ENCODE measurements at regions of chr19 and their contacts with region 1.

Region 1: GRCh38 chr19:33292595-33293441 is 9.5 kb downstream of the CEBPA start:
- DNase-seq: peak; percentile 70 to 75
- H3K4me3 ChIP-seq: no peak overlapping the region
- H3K27ac ChIP-seq: peak overlapping the region in 1 of 3 donors; percentile 36
- H3K4me1 ChIP-seq: peaks cover 14 to 48% of the 10 kb centered on the region in 2 donors
- H3K27me3 ChIP-seq: no peaks in the 10 kb centered on the region
- CTCF ChIP-seq: no peak
- POLR2A ChIP-seq: no peak

Region 2: GRCh38 chr19:33199441-33200265 is 93.2 kb before region 1 on chr19:
- intact Hi-C with region 1: no loop called
- DNase-seq: no peak
- H3K4me3 ChIP-seq: no peak overlapping the region
- H3K27ac ChIP-seq: no peak overlapping the region
- H3K4me1 ChIP-seq: peaks cover 8% of the 10 kb centered on the region in 2 donors
- H3K27me3 ChIP-seq: no peaks in the 10 kb centered on the region
- CTCF ChIP-seq: no peak
- POLR2A ChIP-seq: no peak

Region 3: GRCh38 chr19:33394006-33394849 is 101.4 kb after region 1 on chr19:
- intact Hi-C with region 1: loop called (anchors 5 kb)
- DNase-seq: no peak
- H3K4me3 ChIP-seq: no peak overlapping the region
- H3K27ac ChIP-seq: peak overlapping the region in 2 of 3 donors; percentile 22 to 41
- H3K4me1 ChIP-seq: peaks cover 34 to 83% of the 10 kb centered on the region in 2 donors
- H3K27me3 ChIP-seq: no peaks in the 10 kb centered on the region
- CTCF ChIP-seq: no peak
- POLR2A ChIP-seq: no peak

Measured in thyroid gland (tissue), 4 donors.